WTC11 (cell line): ENCODE measurements at regions of chr6 and their contacts with region 1.

Region 1: GRCh38 chr6:1524040-1524480 is 85.7 kb upstream of the FOXC1 start:
- DNase-seq: peak; percentile 91
- ATAC-seq: peak; percentile 82
- H3K4me3 Mint-ChIP-seq: no peak overlapping the region
- H3K27ac Mint-ChIP-seq: no peak overlapping the region
- H3K4me1 Mint-ChIP-seq: peaks cover 18% of the 10 kb centered on the region
- H3K27me3 Mint-ChIP-seq: peaks cover 78% of the 10 kb centered on the region
- CTCF ChIP-seq: peak; percentile 71

Region 2: GRCh38 chr6:1536526-1537429 is 12.7 kb after region 1 on chr6:
- CTCF ChIA-PET with region 1: interaction called, 21 read pairs
- POLR2A ChIA-PET with region 1: no interaction called
- DNase-seq: no peak
- ATAC-seq: no peak; the same call in 1 of the 2 replicates
- H3K4me3 Mint-ChIP-seq: no peak overlapping the region
- H3K27ac Mint-ChIP-seq: no peak overlapping the region
- H3K4me1 Mint-ChIP-seq: peaks cover 8% of the 10 kb centered on the region
- H3K27me3 Mint-ChIP-seq: peaks cover 5% of the 10 kb centered on the region; the same call in 1 of the 2 replicates
- CTCF ChIP-seq: no peak

Region 3: GRCh38 chr6:1547785-1548184 is 23.7 kb after region 1 on chr6:
- CTCF ChIA-PET with region 1: interaction called, 12 read pairs
- POLR2A ChIA-PET with region 1: no interaction called
- DNase-seq: no peak
- ATAC-seq: no peak
- H3K4me3 Mint-ChIP-seq: no peak overlapping the region
- H3K27ac Mint-ChIP-seq: no peak overlapping the region
- H3K4me1 Mint-ChIP-seq: no peaks in the 10 kb centered on the region
- H3K27me3 Mint-ChIP-seq: peaks cover 9% of the 10 kb centered on the region; the same call in 1 of the 2 replicates
- CTCF ChIP-seq: no peak

Region 4: GRCh38 chr6:1554476-1555310 is 30.6 kb after region 1 on chr6:
- CTCF ChIA-PET with region 1: interaction called, 12 read pairs
- POLR2A ChIA-PET with region 1: no interaction called
- DNase-seq: peak; percentile 60
- ATAC-seq: peak; percentile 79
- H3K4me3 Mint-ChIP-seq: peak overlapping the region; percentile 69
- H3K27ac Mint-ChIP-seq: no peak overlapping the region
- H3K4me1 Mint-ChIP-seq: peaks cover 16% of the 10 kb centered on the region
- H3K27me3 Mint-ChIP-seq: peaks cover 27% of the 10 kb centered on the region
- CTCF ChIP-seq: peak; percentile 75

Region 5: GRCh38 chr6:1686117-1687098 is 162.3 kb after region 1 on chr6:
- CTCF ChIA-PET with region 1: no interaction called
- POLR2A ChIA-PET with region 1: no interaction called
- DNase-seq: no peak
- ATAC-seq: no peak; the same call in 1 of the 2 replicates
- H3K4me3 Mint-ChIP-seq: no peak overlapping the region
- H3K27ac Mint-ChIP-seq: 0 out of 2 replicates have a peak overlapping the region, but pooled peaks have one; percentile 15
- H3K4me1 Mint-ChIP-seq: peaks cover 22% of the 10 kb centered on the region
- H3K27me3 Mint-ChIP-seq: no peaks in the 10 kb centered on the region
- CTCF ChIP-seq: no peak